Activated CD4-positive, alpha-beta memory T cell treated with anti-CD3 and anti-CD28 coated beads for 36 hours (primary cell): ENCODE measurements at regions of chr22 and their contacts with region 1.

Region 1: GRCh38 chr22:29883045-29883774 is at the start of gene MTMR3:
- DNase-seq: peak; percentile 96
- H3K4me3 Mint-ChIP-seq: peak within 1 kb of the TSS; percentile 86
- H3K27ac Mint-ChIP-seq: peak within 1 kb of the TSS; percentile 73
- H3K4me1 Mint-ChIP-seq: peaks cover 12% of the 10 kb centered on the region
- H3K27me3 Mint-ChIP-seq: no peaks in the 10 kb centered on the region
- total RNA-seq, gene MTMR3: 22.7 to 25.3 TPM

Region 2: GRCh38 chr22:29837780-29838598 is 45.2 kb before region 1 on chr22 and contains the start of gene ASCC2:
- CTCF ChIA-PET with region 1: no interaction called
- POLR2A ChIA-PET with region 1: interaction called, 9 read pairs
- intact Hi-C with region 1: loop called (anchors 1 kb)
- DNase-seq: peak; percentile 100
- H3K4me3 Mint-ChIP-seq: peak within 1 kb of the TSS; percentile 91
- H3K27ac Mint-ChIP-seq: peak within 1 kb of the TSS; percentile 95
- H3K4me1 Mint-ChIP-seq: peaks cover 38% of the 10 kb centered on the region
- H3K27me3 Mint-ChIP-seq: no peaks in the 10 kb centered on the region
- total RNA-seq, gene ASCC2: 55.5 to 56.8 TPM